Breast epithelium (tissue), 4 donors: ENCODE measurements at regions of chr20 and their contacts with region 1.

Region 1: DNA sequence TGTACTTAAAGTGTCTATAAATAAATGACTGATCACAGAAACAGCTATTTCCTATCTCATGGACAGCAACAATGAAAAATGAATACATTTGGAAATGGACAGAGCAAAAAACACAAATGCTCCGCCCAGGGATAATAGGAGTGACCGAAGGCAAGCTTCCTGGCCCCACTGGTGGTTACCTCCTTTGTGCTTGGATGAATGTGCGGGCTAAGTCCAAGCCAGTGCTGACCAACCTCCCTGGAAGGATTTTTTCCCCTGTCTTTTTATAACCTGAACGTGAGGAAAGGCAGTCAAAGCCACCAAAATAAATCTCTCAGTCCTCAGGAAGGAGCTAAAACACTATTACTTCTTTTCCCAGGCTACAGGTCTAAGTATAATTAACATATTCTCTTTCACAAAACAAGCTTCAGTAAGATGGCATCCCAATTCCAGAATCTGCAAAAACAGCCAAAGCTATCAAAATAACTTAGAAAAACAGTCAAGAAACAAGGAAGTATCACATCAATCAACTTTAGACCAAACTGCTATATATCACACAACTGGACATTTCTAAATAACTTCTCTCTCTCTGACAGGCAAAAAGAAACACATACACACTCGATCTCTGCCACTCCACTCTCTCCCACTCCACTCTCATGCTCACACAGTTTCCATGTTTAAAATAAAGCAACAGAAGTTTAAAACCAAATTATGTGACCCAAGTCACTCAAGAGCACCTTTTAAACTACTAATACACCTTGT is 10.0 kb downstream of the KIF16B start:
- DNase-seq: no peak
- H3K4me3 ChIP-seq: no peak overlapping the region
- H3K27ac ChIP-seq: peak overlapping the region in 1 of 2 donors; percentile 57
- H3K4me1 ChIP-seq: no peaks in the 10 kb centered on the region
- H3K27me3 ChIP-seq: no peaks in the 10 kb centered on the region
- CTCF ChIP-seq: no peak
- POLR2A ChIP-seq: no peak

Region 2: GRCh38 chr20:15396900-15397299 is 1166.3 kb before region 1 on chr20:
- intact Hi-C with region 1: no loop called
- DNase-seq: no peak
- H3K4me3 ChIP-seq: no peak overlapping the region
- H3K27ac ChIP-seq: no peak overlapping the region
- H3K4me1 ChIP-seq: no peaks in the 10 kb centered on the region
- H3K27me3 ChIP-seq: no peaks in the 10 kb centered on the region
- CTCF ChIP-seq: no peak
- POLR2A ChIP-seq: no peak

Region 3: GRCh38 chr20:16520154-16520553 is 43.1 kb before region 1 on chr20:
- intact Hi-C with region 1: loop called (anchors 5 kb)
- DNase-seq: no peak
- H3K4me3 ChIP-seq: no peak overlapping the region
- H3K27ac ChIP-seq: no peak overlapping the region
- H3K4me1 ChIP-seq: no peaks in the 10 kb centered on the region
- H3K27me3 ChIP-seq: no peaks in the 10 kb centered on the region
- CTCF ChIP-seq: no peak
- POLR2A ChIP-seq: no peak

Region 4: GRCh38 chr20:16551633-16552414 is 11.4 kb before region 1 on chr20:
- intact Hi-C with region 1: no loop called
- DNase-seq: no peak
- H3K4me3 ChIP-seq: no peak overlapping the region
- H3K27ac ChIP-seq: peak overlapping the region in 1 of 2 donors; percentile 74
- H3K4me1 ChIP-seq: no peaks in the 10 kb centered on the region
- H3K27me3 ChIP-seq: no peaks in the 10 kb centered on the region
- CTCF ChIP-seq: no peak
- POLR2A ChIP-seq: no peak